ENCODE measurements at regions of chr13 and their contacts with region 1.

Region 1: DNA sequence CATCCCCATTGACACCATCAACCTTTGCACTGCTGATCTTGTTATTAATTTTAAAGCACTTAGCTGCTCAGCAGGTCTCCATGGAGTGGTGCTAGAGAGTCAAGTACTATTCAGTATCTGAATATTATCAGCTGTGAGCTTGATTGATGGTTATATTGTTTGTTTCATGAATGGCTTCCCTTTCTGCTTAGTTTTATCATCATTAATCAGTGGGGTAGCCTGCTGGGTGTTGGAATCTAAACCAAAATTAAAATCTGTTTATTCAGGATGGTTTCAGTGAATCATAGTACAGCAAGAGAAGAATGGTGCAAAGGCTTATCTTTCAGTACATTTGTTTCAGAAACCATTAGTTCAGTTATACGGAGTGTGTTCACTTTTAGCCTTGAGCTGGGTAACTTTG is 42.5 kb upstream of the SCEL start:
- DNase-seq: peak; percentile 31
- CTCF ChIP-seq: peak; percentile 81

Region 2: GRCh38 chr13:77544355-77544754 is 51.4 kb after region 1 on chr13:
- CTCF ChIA-PET with region 1: interaction called, 10 read pairs
- POLR2A ChIA-PET with region 1: no interaction called
- DNase-seq: no peak
- CTCF ChIP-seq: no peak

Region 3: GRCh38 chr13:77565635-77566034 is 72.7 kb after region 1 on chr13:
- CTCF ChIA-PET with region 1: interaction called, 25 read pairs
- POLR2A ChIA-PET with region 1: no interaction called
- DNase-seq: peak; percentile 34
- CTCF ChIP-seq: peak; percentile 53

Measured in GM10248 (cell line).